Activated CD8-positive, alpha-beta T cell treated with anti-CD3 and anti-CD28 coated beads for 36 hours (primary cell): ENCODE measurements at regions of chr17 and their contacts with region 1.

Region 1: GRCh38 chr17:63406689-63407330 is 39.3 kb downstream of the CYB561 start:
- DNase-seq: peak; percentile 87
- ATAC-seq: peak; percentile 87
- H3K4me3 Mint-ChIP-seq: no peak overlapping the region
- H3K27ac Mint-ChIP-seq: no peak overlapping the region
- H3K4me1 Mint-ChIP-seq: peaks cover 3% of the 10 kb centered on the region
- H3K27me3 Mint-ChIP-seq: no peaks in the 10 kb centered on the region
- CTCF ChIP-seq: peak; percentile 79

Region 2: GRCh38 chr17:62995377-62995885 is 411.4 kb before region 1 on chr17:
- CTCF ChIA-PET with region 1: interaction called, 32 read pairs
- POLR2A ChIA-PET with region 1: no interaction called
- intact Hi-C with region 1: loop called (anchors 10 kb)
- DNase-seq: peak; percentile 60
- ATAC-seq: peak; percentile 85
- H3K4me3 Mint-ChIP-seq: no peak overlapping the region
- H3K27ac Mint-ChIP-seq: no peak overlapping the region
- H3K4me1 Mint-ChIP-seq: peaks cover 19% of the 10 kb centered on the region
- H3K27me3 Mint-ChIP-seq: no peaks in the 10 kb centered on the region
- CTCF ChIP-seq: peak; percentile 73

Region 3: GRCh38 chr17:63381101-63381729 is 25.6 kb before region 1 on chr17:
- CTCF ChIA-PET with region 1: interaction called, 15 read pairs
- POLR2A ChIA-PET with region 1: no interaction called
- intact Hi-C with region 1: no loop called
- DNase-seq: no peak
- ATAC-seq: no peak
- H3K4me3 Mint-ChIP-seq: no peak overlapping the region
- H3K27ac Mint-ChIP-seq: no peak overlapping the region
- H3K4me1 Mint-ChIP-seq: peaks cover 6% of the 10 kb centered on the region
- H3K27me3 Mint-ChIP-seq: no peaks in the 10 kb centered on the region
- CTCF ChIP-seq: no peak

Region 4: GRCh38 chr17:63419949-63420867 is 13.4 kb after region 1 on chr17:
- CTCF ChIA-PET with region 1: interaction called, 29 read pairs
- POLR2A ChIA-PET with region 1: interaction called, 5 read pairs
- intact Hi-C with region 1: no loop called
- DNase-seq: peak; percentile 73
- ATAC-seq: peak; percentile 73
- H3K4me3 Mint-ChIP-seq: peak overlapping the region; percentile 1
- H3K27ac Mint-ChIP-seq: peak overlapping the region; percentile 69
- H3K4me1 Mint-ChIP-seq: peaks cover 11% of the 10 kb centered on the region
- H3K27me3 Mint-ChIP-seq: no peaks in the 10 kb centered on the region
- CTCF ChIP-seq: no peak

Region 5: DNA sequence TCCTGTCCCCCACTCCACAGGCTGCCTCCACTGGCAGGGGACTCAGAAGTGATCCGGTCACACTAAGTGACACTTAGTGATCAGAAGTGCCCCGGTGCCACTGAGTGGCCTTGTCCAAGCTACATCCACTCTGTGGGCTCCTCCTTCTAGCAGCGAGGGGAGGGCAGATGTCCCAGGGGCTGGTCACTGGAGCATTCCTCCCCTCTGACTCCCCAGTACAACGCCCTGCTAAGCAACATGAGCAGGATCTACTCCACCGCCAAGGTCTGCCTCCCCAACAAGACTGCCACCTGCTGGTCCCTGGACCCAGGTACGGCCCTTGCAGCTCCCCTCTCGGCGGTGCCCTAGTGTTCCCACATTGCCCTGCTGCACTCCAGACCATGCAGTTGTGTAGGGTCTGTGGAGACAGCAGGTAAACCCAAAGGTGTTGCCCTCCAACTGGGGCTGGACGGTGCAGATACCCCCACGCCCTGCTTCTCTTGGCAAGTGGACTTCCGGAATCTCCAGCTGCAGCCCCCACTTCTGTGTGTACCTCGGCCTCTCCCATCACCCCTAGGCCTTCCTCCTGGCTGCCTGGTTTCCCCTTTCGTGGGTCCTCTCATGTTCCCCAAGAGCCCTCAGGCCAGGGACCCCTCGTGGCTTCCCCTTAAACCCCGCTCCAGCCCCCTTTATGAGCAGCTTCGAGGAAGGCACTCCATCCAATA is 72.1 kb after region 1 on chr17:
- CTCF ChIA-PET with region 1: interaction called, 19 read pairs
- POLR2A ChIA-PET with region 1: no interaction called
- intact Hi-C with region 1: no loop called
- DNase-seq: peak; percentile 88
- ATAC-seq: peak; percentile 87
- H3K4me3 Mint-ChIP-seq: no peak overlapping the region
- H3K27ac Mint-ChIP-seq: no peak overlapping the region
- H3K4me1 Mint-ChIP-seq: peaks cover 10% of the 10 kb centered on the region
- H3K27me3 Mint-ChIP-seq: peaks cover 29% of the 10 kb centered on the region
- CTCF ChIP-seq: peak; percentile 74